ENCODE measurements at regions of chr15 and their contacts with region 1.

Region 1: GRCh38 chr15:80856809-80857377 is 77.7 kb downstream of the CEMIP start:
- DNase-seq: peak; percentile 82
- ATAC-seq: peak; percentile 82
- H3K4me3 ChIP-seq: no peak overlapping the region
- H3K27ac ChIP-seq: peak overlapping the region; percentile 84
- H3K4me1 ChIP-seq: peaks cover 48% of the 10 kb centered on the region
- H3K27me3 ChIP-seq: no peaks in the 10 kb centered on the region
- CTCF ChIP-seq: no peak

Region 2: GRCh38 chr15:80844011-80844755 is 12.7 kb before region 1 on chr15:
- CTCF ChIA-PET with region 1: no interaction called
- POLR2A ChIA-PET with region 1: no interaction called
- intact Hi-C with region 1: no loop called
- DNase-seq: peak; percentile 86
- ATAC-seq: peak; percentile 55
- H3K4me3 ChIP-seq: no peak overlapping the region
- H3K27ac ChIP-seq: peak overlapping the region; percentile 89
- H3K4me1 ChIP-seq: peaks cover 79% of the 10 kb centered on the region
- H3K27me3 ChIP-seq: no peaks in the 10 kb centered on the region
- CTCF ChIP-seq: no peak

Region 3: DNA sequence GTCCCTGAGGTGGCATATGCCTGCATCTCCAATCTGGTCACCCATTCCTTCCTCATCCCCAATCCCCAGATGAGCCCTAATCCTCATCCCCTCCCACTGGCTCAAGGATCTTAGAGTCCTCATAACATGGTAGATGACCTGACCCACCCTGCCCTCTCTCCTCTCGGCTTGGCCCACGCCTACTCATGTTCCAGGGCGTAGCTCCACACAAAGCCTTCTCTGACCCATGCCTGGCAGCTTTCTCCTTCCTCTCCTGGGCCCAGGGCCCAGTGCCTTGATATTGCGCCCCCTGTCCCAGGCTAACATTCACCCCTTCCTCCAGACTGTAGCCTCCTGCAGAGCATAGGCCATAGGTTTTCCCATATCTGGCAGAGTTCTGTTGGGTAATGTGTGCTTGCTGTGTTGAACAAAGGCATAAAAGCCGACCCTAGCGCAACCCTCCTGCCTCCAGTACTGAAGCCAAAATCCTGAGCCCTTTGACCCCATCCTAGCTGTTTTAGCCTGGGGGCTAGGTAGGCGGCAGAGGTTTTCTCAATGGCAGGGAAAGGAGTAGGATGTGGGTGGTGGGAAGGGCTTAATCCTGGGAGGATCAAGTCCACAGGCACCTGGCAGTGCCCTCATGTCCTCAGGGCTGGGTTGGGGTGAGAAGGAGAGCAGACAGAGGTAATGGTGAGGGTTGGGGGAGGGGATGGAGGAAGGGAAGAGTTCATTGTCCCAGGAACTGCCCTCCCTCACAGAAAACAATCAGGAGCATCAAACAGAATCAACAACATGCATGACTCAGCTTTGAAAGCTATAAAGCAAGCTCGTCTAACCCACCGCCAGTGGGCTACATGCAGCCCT is 97.3 kb after region 1 on chr15:
- CTCF ChIA-PET with region 1: no interaction called
- POLR2A ChIA-PET with region 1: no interaction called
- intact Hi-C with region 1: loop called (anchors 10 kb)
- DNase-seq: peak; percentile 89
- ATAC-seq: peak; percentile 37
- H3K4me3 ChIP-seq: no peak overlapping the region
- H3K27ac ChIP-seq: peak overlapping the region; percentile 80
- H3K4me1 ChIP-seq: peaks cover 33% of the 10 kb centered on the region
- H3K27me3 ChIP-seq: no peaks in the 10 kb centered on the region
- CTCF ChIP-seq: 0 out of 2 replicates have a peak, but pooled peaks have one; percentile 12